MCF 10A (cell line): ENCODE measurements at regions of chr3 and their contacts with region 1.

Region 1: GRCh38 chr3:112303764-112304325 is 9.8 kb upstream of the SLC9C1 start:
- DNase-seq: no peak
- H3K4me3 Mint-ChIP-seq: no peak overlapping the region
- H3K27ac Mint-ChIP-seq: no peak overlapping the region
- H3K4me1 Mint-ChIP-seq: peaks cover 7% of the 10 kb centered on the region
- H3K27me3 Mint-ChIP-seq: no peaks in the 10 kb centered on the region
- CTCF ChIP-seq: no peak

Region 2: GRCh38 chr3:112247900-112248299 is 55.9 kb before region 1 on chr3:
- CTCF ChIA-PET with region 1: no interaction called
- POLR2A ChIA-PET with region 1: no interaction called
- intact Hi-C with region 1: no loop called
- DNase-seq: no peak
- H3K4me3 Mint-ChIP-seq: no peak overlapping the region
- H3K27ac Mint-ChIP-seq: no peak overlapping the region
- H3K4me1 Mint-ChIP-seq: no peaks in the 10 kb centered on the region
- H3K27me3 Mint-ChIP-seq: no peaks in the 10 kb centered on the region
- CTCF ChIP-seq: no peak

Region 3: GRCh38 chr3:112321867-112322649 is 18.2 kb after region 1 on chr3:
- CTCF ChIA-PET with region 1: interaction called, 8 read pairs
- POLR2A ChIA-PET with region 1: interaction called, 40 read pairs
- intact Hi-C with region 1: no loop called
- DNase-seq: no peak
- H3K4me3 Mint-ChIP-seq: no peak overlapping the region
- H3K27ac Mint-ChIP-seq: no peak overlapping the region
- H3K4me1 Mint-ChIP-seq: peaks cover 20% of the 10 kb centered on the region
- H3K27me3 Mint-ChIP-seq: no peaks in the 10 kb centered on the region
- CTCF ChIP-seq: no peak

Region 4: GRCh38 chr3:112341381-112341780 is 37.5 kb after region 1 on chr3:
- CTCF ChIA-PET with region 1: no interaction called
- POLR2A ChIA-PET with region 1: no interaction called
- intact Hi-C with region 1: no loop called
- DNase-seq: no peak
- H3K4me3 Mint-ChIP-seq: no peak overlapping the region
- H3K27ac Mint-ChIP-seq: no peak overlapping the region
- H3K4me1 Mint-ChIP-seq: no peaks in the 10 kb centered on the region
- H3K27me3 Mint-ChIP-seq: no peaks in the 10 kb centered on the region
- CTCF ChIP-seq: no peak

Region 5: DNA sequence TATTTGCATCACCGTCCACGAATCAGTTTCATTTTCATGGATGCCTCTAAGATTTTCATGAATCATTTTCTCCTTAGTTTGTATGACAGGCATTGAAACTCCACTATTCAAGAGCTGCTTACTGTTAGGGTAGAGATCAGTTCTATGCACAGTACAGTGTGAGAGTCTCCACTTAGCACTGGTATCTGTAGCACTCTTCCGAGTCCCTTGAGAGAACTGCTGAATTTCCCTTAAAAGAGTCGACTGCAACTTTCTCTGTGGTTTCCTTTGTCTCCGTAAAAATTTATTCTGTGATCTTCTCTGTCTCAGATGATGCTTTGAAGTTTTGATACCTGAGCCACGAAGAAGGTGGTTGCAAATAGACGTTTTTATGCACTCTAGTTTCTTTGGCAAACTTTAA is 701.8 kb after region 1 on chr3:
- CTCF ChIA-PET with region 1: no interaction called
- POLR2A ChIA-PET with region 1: no interaction called
- intact Hi-C with region 1: no loop called
- DNase-seq: no peak
- H3K4me3 Mint-ChIP-seq: no peak overlapping the region
- H3K27ac Mint-ChIP-seq: no peak overlapping the region
- H3K4me1 Mint-ChIP-seq: no peaks in the 10 kb centered on the region
- H3K27me3 Mint-ChIP-seq: no peaks in the 10 kb centered on the region
- CTCF ChIP-seq: no peak